ENCODE measurements at regions of chr6 and their contacts with region 1.

Region 1: DNA sequence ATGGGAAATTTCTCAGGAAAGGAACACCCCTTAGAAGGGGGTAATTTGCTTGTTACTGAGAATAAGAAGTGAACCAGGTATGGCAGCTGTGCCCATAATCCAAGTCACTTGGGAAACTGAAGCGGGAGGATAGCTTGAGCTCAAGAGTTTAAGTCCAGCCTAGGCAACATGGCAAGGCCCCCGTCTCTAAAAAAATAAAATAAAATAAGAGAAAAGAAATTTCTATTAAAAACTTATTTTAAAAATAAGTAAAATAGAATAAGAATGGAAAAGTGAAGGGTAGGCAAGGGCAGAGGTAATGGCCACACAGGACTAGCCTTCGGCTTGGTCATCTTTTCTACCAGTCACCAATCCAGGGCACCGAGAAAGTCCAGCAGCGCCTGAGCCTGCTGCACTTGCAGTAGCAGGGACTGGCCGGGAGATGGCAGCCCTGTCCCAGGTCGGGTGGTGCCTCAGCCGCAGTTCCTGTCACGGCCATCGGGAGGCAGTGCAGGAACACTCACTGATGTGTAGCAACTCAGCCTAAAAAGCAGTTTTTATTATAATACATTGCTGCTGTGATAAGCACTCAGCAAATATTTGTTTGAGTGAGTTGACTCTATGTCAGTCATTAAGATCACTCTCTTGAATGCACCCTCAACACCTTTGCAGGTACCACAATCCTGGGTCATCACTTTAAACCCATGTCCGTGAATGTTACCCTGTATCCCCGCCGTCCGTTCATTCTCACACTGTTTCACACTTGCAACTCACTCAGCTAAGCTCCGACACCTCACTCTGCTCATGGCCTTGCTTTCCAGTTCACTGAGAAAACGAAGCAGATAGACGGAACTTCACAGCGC is 23.2 kb upstream of the GCM1 start:
- DNase-seq: peak; percentile 92
- H3K4me3 Mint-ChIP-seq: no peak overlapping the region
- H3K27ac Mint-ChIP-seq: no peak overlapping the region
- H3K4me1 Mint-ChIP-seq: no peaks in the 10 kb centered on the region
- H3K27me3 Mint-ChIP-seq: no peaks in the 10 kb centered on the region

Region 2: GRCh38 chr6:53194542-53194941 is 22.7 kb after region 1 on chr6:
- CTCF ChIA-PET with region 1: no interaction called
- POLR2A ChIA-PET with region 1: no interaction called
- intact Hi-C with region 1: no loop called
- DNase-seq: no peak
- H3K4me3 Mint-ChIP-seq: no peak overlapping the region
- H3K27ac Mint-ChIP-seq: no peak overlapping the region
- H3K4me1 Mint-ChIP-seq: peaks cover 3% of the 10 kb centered on the region
- H3K27me3 Mint-ChIP-seq: no peaks in the 10 kb centered on the region

Region 3: DNA sequence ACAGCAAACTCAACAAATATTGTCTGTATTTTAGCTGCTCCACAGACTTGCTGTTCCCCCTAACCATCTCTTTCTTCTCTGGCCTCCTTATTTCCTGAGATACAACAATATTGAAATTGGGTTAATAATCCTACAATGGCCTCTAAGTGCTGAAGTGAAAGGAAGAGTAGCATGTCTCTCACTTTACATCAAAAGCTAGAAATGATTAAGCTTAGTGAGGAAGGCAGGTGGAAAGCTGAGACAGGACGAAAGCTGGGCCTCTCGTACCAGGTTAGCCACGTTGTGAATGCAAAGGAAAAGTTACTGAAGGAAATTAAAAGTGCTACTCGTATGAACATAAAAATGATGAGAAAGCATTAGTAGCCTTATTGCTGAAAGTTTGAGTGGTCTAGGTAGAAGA is 113.1 kb after region 1 on chr6:
- CTCF ChIA-PET with region 1: interaction called, 19 read pairs
- POLR2A ChIA-PET with region 1: no interaction called
- intact Hi-C with region 1: loop called (anchors 5 kb)
- DNase-seq: peak; percentile 57
- H3K4me3 Mint-ChIP-seq: peak overlapping the region; percentile 30
- H3K27ac Mint-ChIP-seq: peak overlapping the region; percentile 68
- H3K4me1 Mint-ChIP-seq: peaks cover 69% of the 10 kb centered on the region
- H3K27me3 Mint-ChIP-seq: no peaks in the 10 kb centered on the region

Region 4: DNA sequence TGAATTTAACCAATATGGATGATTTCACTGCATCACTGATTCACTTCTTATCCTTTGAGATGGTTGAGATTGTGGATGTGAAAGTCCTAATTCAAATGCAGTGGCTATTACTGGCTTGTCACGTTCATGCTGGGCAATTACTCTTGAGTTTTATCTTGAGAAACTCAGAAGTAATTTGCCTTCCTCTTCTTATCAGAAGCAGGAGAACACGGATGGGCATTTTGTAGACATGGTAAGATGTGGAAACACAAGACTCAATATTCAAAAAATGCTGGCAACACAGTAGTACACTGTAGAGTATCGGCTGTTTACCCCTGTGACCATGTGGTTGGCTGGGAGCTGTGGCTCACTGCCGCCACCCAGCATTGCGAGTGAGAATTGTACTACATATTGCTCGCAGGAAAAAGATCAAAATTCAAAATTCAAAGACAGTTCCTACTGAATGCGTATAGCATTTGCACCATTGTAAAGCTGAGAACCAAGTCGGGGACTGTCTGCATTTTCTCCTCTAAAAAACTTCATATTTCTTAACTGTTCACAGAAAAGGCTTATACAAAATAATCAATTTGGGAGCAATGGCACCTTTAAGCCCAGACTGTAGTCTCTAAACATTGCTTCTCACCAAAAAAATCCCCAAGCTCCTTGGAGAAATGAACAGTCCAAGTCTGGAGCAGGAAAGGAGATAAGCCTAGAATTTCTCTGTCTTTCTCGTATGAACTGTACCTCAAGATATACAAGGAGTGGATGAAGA is 238.9 kb after region 1 on chr6:
- CTCF ChIA-PET with region 1: interaction called, 71 read pairs
- POLR2A ChIA-PET with region 1: no interaction called
- intact Hi-C with region 1: loop called (anchors 1 kb)
- DNase-seq: peak; percentile 70
- H3K4me3 Mint-ChIP-seq: no peak overlapping the region
- H3K27ac Mint-ChIP-seq: no peak overlapping the region
- H3K4me1 Mint-ChIP-seq: peaks cover 3% of the 10 kb centered on the region
- H3K27me3 Mint-ChIP-seq: no peaks in the 10 kb centered on the region

Region 5: DNA sequence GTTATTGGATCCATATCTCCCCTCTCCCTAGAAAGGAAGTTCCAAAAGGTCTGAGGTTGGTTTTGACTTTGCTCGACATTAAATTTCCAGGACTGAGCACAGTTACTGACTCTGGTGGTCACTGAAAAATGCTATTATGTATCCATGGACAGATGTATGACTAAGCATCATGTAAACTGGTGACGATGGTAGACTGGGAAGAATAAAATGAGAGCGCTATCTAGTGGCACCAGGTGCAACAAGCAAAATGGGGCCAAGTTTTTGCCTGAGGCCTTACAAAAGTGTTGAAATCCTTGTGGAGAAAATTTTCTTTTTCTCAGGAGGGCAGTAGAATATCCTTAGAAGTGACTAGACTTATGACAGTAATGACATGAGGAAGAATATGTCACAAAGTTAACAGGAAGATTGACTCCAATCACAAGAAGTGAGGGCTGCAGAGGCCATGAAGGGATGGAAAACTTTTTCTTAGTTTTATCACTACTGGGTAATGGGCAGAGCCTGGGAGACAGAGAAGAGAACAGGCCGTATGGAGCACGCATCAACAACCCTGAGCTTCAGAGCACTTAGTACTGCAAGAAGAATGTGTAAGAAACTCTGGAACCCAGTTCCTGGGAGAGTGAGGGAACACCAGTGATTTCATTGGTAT is 265.9 kb after region 1 on chr6:
- CTCF ChIA-PET with region 1: interaction called, 13 read pairs
- POLR2A ChIA-PET with region 1: no interaction called
- intact Hi-C with region 1: loop called (anchors 1 kb)
- DNase-seq: peak; percentile 36
- H3K4me3 Mint-ChIP-seq: no peak overlapping the region
- H3K27ac Mint-ChIP-seq: no peak overlapping the region
- H3K4me1 Mint-ChIP-seq: peaks cover 21% of the 10 kb centered on the region
- H3K27me3 Mint-ChIP-seq: peaks cover 7% of the 10 kb centered on the region

Region 6: GRCh38 chr6:53651764-53652401 is 480.1 kb after region 1 on chr6:
- CTCF ChIA-PET with region 1: interaction called, 3 read pairs
- POLR2A ChIA-PET with region 1: no interaction called
- intact Hi-C with region 1: loop called (anchors 10 kb)
- DNase-seq: peak; percentile 86
- H3K4me3 Mint-ChIP-seq: peak overlapping the region; percentile 85
- H3K27ac Mint-ChIP-seq: peak overlapping the region; percentile 80
- H3K4me1 Mint-ChIP-seq: peaks cover 31% of the 10 kb centered on the region
- H3K27me3 Mint-ChIP-seq: no peaks in the 10 kb centered on the region